CD8-positive, alpha-beta T cell (primary cell): ENCODE measurements at regions of chr6 and their contacts with region 1.

Region 1: GRCh38 chr6:26196846-26197648 is 109.8 kb downstream of the HFE start:
- DNase-seq: peak; percentile 53 to 95 (median 79)
- ATAC-seq: peak; percentile 57
- H3K4me3 ChIP-seq: peak overlapping the region; percentile 78 to 82
- H3K4me3 Mint-ChIP-seq: peak overlapping the region; percentile 96
- H3K27ac ChIP-seq: peak overlapping the region; percentile 88 to 89
- H3K27ac Mint-ChIP-seq: peak overlapping the region; percentile 99
- H3K4me1 ChIP-seq: peaks cover 20% of the 10 kb centered on the region
- H3K4me1 Mint-ChIP-seq: peaks cover 44% of the 10 kb centered on the region
- H3K27me3 ChIP-seq: no peaks in the 10 kb centered on the region
- H3K27me3 Mint-ChIP-seq: no peaks in the 10 kb centered on the region
- CTCF ChIP-seq: no peak

Region 2: GRCh38 chr6:26054857-26055669 is 142.0 kb before region 1 on chr6:
- CTCF ChIA-PET with region 1: no interaction called
- POLR2A ChIA-PET with region 1: interaction called, 59 read pairs
- intact Hi-C with region 1: loop called in 1 of 2 experiments (anchors 5 kb)
- DNase-seq: peak; percentile 71 to 94 (median 88)
- ATAC-seq: peak; percentile 72
- H3K4me3 ChIP-seq: peak overlapping the region; percentile 75 to 85
- H3K4me3 Mint-ChIP-seq: peak overlapping the region; percentile 96
- H3K27ac ChIP-seq: peak overlapping the region; percentile 85 to 96
- H3K27ac Mint-ChIP-seq: peak overlapping the region; percentile 99
- H3K4me1 ChIP-seq: peaks cover 17% of the 10 kb centered on the region
- H3K4me1 Mint-ChIP-seq: peaks cover 23% of the 10 kb centered on the region
- H3K27me3 ChIP-seq: no peaks in the 10 kb centered on the region
- H3K27me3 Mint-ChIP-seq: no peaks in the 10 kb centered on the region
- CTCF ChIP-seq: no peak

Region 3: DNA sequence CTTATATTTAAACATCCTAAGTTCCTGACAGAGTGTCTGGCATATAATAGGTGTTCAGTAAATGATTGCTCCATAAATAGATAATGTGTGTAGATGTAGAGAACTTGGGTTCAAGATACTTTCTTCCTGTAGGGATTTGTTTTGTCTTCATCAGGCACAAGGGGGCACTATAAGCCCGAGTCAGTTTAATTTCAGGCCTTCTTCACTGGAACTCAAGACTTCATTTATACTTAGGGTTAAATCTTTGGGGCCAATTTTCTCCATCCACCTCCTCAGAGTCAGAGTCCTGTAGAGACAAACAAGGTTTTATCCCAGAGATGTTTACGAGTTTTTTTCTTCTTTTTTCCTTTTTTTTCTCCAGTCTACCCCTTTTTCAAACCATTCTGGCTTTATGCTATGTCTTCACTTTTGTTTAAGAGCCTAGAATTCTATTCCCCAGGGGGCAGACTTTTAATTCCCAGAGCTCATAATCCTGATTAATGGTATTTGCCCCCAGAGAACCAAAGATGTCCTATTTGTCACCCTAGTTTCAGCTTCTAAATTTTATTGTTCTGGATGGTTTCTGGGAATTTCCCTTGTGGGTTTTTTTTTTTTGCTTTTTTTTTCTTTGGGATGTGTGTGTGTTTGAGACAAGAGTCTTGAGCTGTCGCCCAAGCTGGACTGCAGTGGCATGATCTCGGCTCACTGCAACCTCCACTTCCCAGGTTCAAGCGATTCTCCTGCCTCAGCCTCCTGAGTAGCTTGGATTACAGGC is 21.4 kb before region 1 on chr6:
- CTCF ChIA-PET with region 1: interaction called, 44 read pairs
- POLR2A ChIA-PET with region 1: interaction called, 250 read pairs
- intact Hi-C with region 1: loop called in 1 of 2 experiments (anchors 1 kb)
- DNase-seq: peak in 7 of 9 experiments; percentile 33 to 87 (median 53)
- ATAC-seq: no peak
- H3K4me3 ChIP-seq: no peak overlapping the region
- H3K4me3 Mint-ChIP-seq: peak overlapping the region; percentile 3
- H3K27ac ChIP-seq: no peak overlapping the region
- H3K27ac Mint-ChIP-seq: peak overlapping the region; percentile 63
- H3K4me1 ChIP-seq: peaks cover 26% of the 10 kb centered on the region
- H3K4me1 Mint-ChIP-seq: peaks cover 39% of the 10 kb centered on the region
- H3K27me3 ChIP-seq: no peaks in the 10 kb centered on the region
- H3K27me3 Mint-ChIP-seq: no peaks in the 10 kb centered on the region
- CTCF ChIP-seq: peak; percentile 93

Region 4: DNA sequence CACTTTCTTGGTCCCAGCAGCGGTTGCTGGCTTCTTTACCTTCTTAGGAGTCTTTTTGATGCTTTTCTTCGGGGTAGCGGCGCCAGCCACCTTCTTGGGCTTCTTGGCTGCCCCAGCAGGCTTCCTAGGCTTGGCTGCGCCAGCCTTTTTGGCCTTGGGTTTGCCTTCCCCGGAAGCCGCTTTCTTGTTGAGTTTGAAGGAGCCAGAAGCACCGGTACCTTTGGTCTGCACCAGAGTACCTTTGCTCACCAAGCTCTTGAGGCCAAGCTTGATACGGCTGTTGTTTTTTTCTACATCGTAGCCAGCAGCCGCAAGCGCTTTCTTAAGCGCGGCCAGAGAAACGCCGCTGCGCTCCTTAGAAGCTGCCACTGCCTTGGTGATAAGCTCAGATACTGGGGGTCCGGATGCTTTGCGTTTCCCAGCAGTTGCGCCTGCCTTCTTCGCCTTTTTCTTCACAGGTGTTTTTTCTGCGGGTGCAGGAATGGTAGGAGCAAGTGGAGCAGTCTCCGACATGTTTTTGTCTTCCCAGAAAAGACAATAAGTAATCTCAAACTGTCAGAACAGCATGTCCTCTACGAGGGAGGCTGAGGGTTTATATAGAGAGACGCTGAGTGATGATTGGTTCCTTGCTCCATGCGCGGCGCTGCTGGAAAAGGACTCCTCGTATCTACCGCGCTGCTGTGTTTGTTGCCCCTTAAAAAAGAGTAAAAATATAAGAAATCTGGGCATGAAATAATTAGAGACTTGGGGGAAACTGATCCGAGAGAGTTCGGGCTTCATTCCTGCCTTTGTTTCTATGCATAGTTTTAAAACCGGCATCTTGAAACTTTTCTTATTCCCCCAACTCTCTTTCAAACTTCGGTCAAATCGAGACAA is 37.6 kb after region 1 on chr6:
- CTCF ChIA-PET with region 1: interaction called, 6 read pairs
- POLR2A ChIA-PET with region 1: interaction called, 428 read pairs
- intact Hi-C with region 1: no loop called
- DNase-seq: peak; percentile 55 to 88 (median 66)
- ATAC-seq: peak; percentile 63
- H3K4me3 ChIP-seq: peak overlapping the region; percentile 66 to 76
- H3K4me3 Mint-ChIP-seq: peak overlapping the region; percentile 85
- H3K27ac ChIP-seq: peak overlapping the region; percentile 84 to 92
- H3K27ac Mint-ChIP-seq: peak overlapping the region; percentile 93
- H3K4me1 ChIP-seq: peaks cover 14% of the 10 kb centered on the region
- H3K4me1 Mint-ChIP-seq: peaks cover 31% of the 10 kb centered on the region
- H3K27me3 ChIP-seq: no peaks in the 10 kb centered on the region
- H3K27me3 Mint-ChIP-seq: no peaks in the 10 kb centered on the region
- CTCF ChIP-seq: no peak

Region 5: DNA sequence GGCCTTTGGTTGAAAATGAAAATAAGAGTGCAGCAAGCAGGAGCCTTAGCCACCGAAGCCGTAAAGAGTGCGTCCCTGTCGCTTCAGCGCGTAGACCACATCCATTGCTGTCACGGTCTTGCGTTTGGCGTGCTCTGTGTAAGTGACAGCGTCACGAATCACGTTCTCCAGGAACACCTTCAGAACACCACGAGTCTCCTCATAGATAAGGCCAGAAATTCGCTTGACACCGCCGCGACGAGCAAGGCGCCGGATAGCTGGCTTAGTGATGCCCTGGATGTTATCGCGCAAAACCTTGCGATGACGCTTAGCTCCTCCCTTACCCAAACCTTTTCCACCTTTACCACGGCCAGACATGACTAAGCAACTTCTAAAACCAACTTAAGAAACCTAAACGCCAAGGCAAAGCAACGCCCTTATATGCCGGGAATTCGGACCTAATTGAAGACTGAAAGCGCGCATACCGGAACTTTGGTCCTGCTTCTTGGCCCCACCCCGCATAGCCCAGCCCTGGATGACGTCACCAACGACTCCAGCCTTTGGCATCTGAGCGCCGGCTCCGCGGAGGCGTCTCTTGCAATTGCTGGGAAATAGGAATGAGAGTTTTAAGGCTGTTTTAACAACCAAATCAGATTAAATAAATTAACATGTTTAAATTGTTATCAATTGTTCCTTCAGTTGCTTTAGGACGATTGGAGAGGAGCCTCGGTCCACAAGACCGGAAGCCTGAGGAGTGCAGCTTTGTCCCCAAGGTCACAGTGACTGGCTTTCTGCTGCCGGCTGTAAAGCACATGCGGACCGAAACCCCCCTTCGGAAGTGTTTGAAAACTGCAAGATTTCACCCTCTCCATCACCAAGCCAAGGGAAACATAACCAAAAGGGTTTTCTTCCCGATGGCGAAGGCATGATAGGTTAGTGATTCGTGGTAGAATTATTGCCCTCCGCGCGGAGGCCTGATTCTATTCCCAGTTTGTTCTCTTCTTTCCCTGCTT is 88.4 kb after region 1 on chr6:
- CTCF ChIA-PET with region 1: interaction called, 13 read pairs
- POLR2A ChIA-PET with region 1: interaction called, 113 read pairs
- intact Hi-C with region 1: loop called in 1 of 2 experiments (anchors 1 kb)
- DNase-seq: peak; percentile 83 to 99 (median 96)
- ATAC-seq: peak; percentile 82
- H3K4me3 ChIP-seq: peak overlapping the region; percentile 73 to 76
- H3K4me3 Mint-ChIP-seq: peak overlapping the region; percentile 91
- H3K27ac ChIP-seq: peak overlapping the region; percentile 89 to 96
- H3K27ac Mint-ChIP-seq: peak overlapping the region; percentile 97
- H3K4me1 ChIP-seq: peaks cover 14% of the 10 kb centered on the region
- H3K4me1 Mint-ChIP-seq: peaks cover 31% of the 10 kb centered on the region
- H3K27me3 ChIP-seq: no peaks in the 10 kb centered on the region
- H3K27me3 Mint-ChIP-seq: no peaks in the 10 kb centered on the region
- CTCF ChIP-seq: no peak

Region 6: GRCh38 chr6:27809939-27810767 is 1613.1 kb after region 1 on chr6:
- CTCF ChIA-PET with region 1: no interaction called
- POLR2A ChIA-PET with region 1: interaction called, 40 read pairs
- intact Hi-C with region 1: no loop called
- DNase-seq: peak; percentile 63 to 96 (median 74)
- ATAC-seq: peak; percentile 60
- H3K4me3 ChIP-seq: peak overlapping the region; percentile 52 to 65
- H3K4me3 Mint-ChIP-seq: peak overlapping the region; percentile 95
- H3K27ac ChIP-seq: peak overlapping the region; percentile 83 to 87
- H3K27ac Mint-ChIP-seq: peak overlapping the region; percentile 99
- H3K4me1 ChIP-seq: peaks cover 36% of the 10 kb centered on the region
- H3K4me1 Mint-ChIP-seq: peaks cover 57% of the 10 kb centered on the region
- H3K27me3 ChIP-seq: no peaks in the 10 kb centered on the region
- H3K27me3 Mint-ChIP-seq: no peaks in the 10 kb centered on the region
- CTCF ChIP-seq: no peak